CD8-positive, alpha-beta T cell (primary cell): ENCODE measurements at regions of chr17 and their contacts with region 1.

Region 1: GRCh38 chr17:42566883-42567573 is at the start of gene MLX:
- DNase-seq: peak; percentile 75 to 96 (median 92)
- ATAC-seq: peak; percentile 75
- H3K4me3 ChIP-seq: peak within 1 kb of the TSS; percentile 88 to 91
- H3K4me3 Mint-ChIP-seq: peak within 1 kb of the TSS; percentile 97
- H3K27ac ChIP-seq: peak within 1 kb of the TSS; percentile 77
- H3K27ac Mint-ChIP-seq: peak within 1 kb of the TSS; percentile 97
- H3K4me1 ChIP-seq: peaks cover 41% of the 10 kb centered on the region
- H3K4me1 Mint-ChIP-seq: peaks cover 40% of the 10 kb centered on the region
- H3K27me3 ChIP-seq: no peaks in the 10 kb centered on the region
- H3K27me3 Mint-ChIP-seq: no peaks in the 10 kb centered on the region
- CTCF ChIP-seq: no peak
- total RNA-seq, gene MLX: 18.3 to 21.3 TPM

Region 2: DNA sequence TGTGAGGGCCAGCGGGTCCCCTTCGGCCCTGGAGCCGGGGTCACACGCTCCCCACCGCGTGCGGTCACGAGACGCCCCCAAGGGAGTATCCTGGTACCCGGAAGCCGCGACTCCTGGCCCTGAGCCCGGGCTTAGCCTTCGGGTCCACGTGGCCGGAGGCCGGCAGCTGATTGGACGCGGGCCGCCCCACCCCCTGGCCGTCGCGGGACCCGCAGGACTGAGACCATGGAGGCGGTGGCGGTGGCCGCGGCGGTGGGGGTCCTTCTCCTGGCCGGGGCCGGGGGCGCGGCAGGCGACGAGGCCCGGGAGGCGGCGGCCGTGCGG is 31.0 kb before region 1 on chr17 and contains the start of gene NAGLU:
- CTCF ChIA-PET with region 1: no interaction called
- POLR2A ChIA-PET with region 1: interaction called, 4 read pairs
- intact Hi-C with region 1: loop called in 1 of 2 experiments (anchors 1 kb)
- DNase-seq: peak; percentile 47 to 89 (median 76)
- ATAC-seq: peak; percentile 69
- H3K4me3 ChIP-seq: peak within 1 kb of the TSS; percentile 56 to 82
- H3K4me3 Mint-ChIP-seq: peak within 1 kb of the TSS; percentile 87
- H3K27ac ChIP-seq: peak within 1 kb of the TSS; percentile 33 to 71
- H3K27ac Mint-ChIP-seq: peak within 1 kb of the TSS; percentile 87
- H3K4me1 ChIP-seq: peaks cover 38% of the 10 kb centered on the region
- H3K4me1 Mint-ChIP-seq: peaks cover 42% of the 10 kb centered on the region
- H3K27me3 ChIP-seq: no peaks in the 10 kb centered on the region
- H3K27me3 Mint-ChIP-seq: no peaks in the 10 kb centered on the region
- CTCF ChIP-seq: no peak
- total RNA-seq, gene NAGLU: 7.4 TPM

Region 3: GRCh38 chr17:42554250-42555121 is 12.5 kb before region 1 on chr17:
- CTCF ChIA-PET with region 1: no interaction called
- POLR2A ChIA-PET with region 1: interaction called, 4 read pairs
- intact Hi-C with region 1: loop called in 1 of 2 experiments (anchors 1 kb)
- DNase-seq: peak; percentile 38 to 91 (median 78)
- ATAC-seq: peak; percentile 88
- H3K4me3 ChIP-seq: peak overlapping the region; percentile 70 to 87
- H3K4me3 Mint-ChIP-seq: peak overlapping the region; percentile 89
- H3K27ac ChIP-seq: peak overlapping the region; percentile 74 to 80
- H3K27ac Mint-ChIP-seq: peak overlapping the region; percentile 94
- H3K4me1 ChIP-seq: peaks cover 12% of the 10 kb centered on the region
- H3K4me1 Mint-ChIP-seq: peaks cover 29% of the 10 kb centered on the region
- H3K27me3 ChIP-seq: no peaks in the 10 kb centered on the region
- H3K27me3 Mint-ChIP-seq: no peaks in the 10 kb centered on the region
- CTCF ChIP-seq: no peak